Astrocyte of the cerebellum (primary cell): ENCODE measurements at regions of chr14 and their contacts with region 1.

Region 1: DNA sequence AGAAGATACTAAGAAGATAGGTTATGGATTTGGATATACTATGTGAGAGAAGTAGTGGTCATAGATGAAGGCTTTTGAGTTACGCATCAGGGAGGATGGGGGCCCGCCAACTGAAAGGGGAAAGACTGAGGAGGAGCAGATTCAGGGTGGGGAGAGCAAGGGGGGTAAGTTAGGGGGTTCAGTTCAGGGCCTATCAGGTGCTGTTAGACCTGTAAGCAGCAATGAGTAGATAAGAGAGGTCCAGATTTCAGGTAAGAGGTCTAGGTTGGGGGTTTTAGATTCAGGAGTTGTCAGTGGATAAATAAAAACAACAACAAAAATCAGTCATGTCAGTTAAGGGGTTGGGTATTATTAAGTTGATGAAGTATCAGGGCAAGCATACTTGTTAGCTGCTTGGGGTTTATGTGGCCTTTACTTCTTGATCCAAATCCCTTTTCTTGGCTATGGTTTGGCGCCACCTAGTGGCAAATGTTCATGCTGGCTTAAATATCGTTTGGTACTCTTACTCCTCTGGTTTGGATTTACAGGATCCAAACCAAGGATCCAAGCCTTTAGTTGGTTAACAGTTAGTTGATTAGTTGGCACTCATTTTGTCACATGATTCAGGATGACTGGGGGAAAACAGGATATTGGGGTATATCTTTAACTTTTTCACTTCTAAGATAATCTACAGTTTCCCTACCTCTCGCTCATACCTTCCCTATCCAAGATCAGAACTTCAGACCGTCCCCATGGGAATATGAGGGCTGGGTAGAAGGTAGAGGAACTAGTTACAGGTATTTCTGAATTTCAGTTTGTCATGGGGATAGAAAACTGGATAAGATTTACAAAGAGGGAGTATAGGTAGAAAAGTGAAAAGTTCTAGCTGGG is 65.1 kb downstream of the PCNX1 start:
- DNase-seq: peak; percentile 86
- H3K4me3 ChIP-seq: no peak overlapping the region
- CTCF ChIP-seq: peak; percentile 90

Region 2: GRCh38 chr14:70600382-70601157 is 371.8 kb before region 1 on chr14 and contains the start of gene MED6:
- in situ Hi-C with region 1: loop called (anchors 5 kb)
- DNase-seq: peak; percentile 69
- H3K4me3 ChIP-seq: peak within 1 kb of the TSS; percentile 99
- CTCF ChIP-seq: no peak

Region 3: GRCh38 chr14:70856851-70857495 is 115.4 kb before region 1 on chr14:
- in situ Hi-C with region 1: loop called (anchors 25 kb)
- DNase-seq: peak; percentile 89
- H3K4me3 ChIP-seq: no peak overlapping the region
- CTCF ChIP-seq: no peak